HAP-1 (cell line): ENCODE measurements at regions of chr1 and their contacts with region 1.

Region 1: DNA sequence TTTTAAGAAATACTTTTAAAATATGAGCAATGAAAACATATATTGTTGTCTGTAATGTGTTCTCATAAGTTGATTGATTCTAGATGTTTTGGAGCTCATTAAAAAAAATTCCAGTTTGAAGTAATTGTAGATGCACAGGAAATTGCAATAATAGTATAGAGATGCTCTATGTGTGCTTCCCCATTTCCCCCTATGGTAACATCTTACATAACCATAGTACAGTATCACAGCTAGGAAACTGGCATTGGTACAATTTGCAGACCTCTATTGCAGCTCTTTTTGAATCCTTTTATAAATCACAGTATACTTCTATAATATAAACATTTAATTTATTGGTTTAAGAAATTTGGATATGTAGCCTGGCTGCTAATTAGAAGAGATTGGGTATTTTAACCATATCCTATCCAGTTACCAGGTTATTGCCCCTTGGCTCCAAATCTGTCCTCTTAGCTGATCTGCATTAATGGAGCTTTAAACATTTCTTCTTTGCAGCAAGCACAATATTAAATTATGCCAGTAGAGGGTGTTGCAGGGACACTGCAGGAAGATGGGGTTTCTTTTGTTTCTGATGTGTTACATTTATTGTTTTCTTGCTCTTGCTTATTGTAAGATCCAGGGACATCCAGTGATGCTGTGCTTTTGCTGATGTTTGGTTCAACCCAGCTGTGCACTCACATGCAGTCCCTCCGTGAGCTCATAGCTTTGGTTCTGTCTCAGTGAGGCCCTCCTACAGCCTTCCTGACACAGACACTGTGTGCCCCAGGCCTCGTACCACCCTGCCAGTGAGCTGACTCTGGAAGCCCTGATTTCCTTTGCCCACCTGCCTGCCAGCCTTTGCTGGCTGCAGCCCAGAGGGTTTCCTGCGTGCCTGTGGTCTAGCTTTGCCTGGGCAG is 103.3 kb downstream of the RABGAP1L start:
- DNase-seq: peak; percentile 16 to 75
- H3K4me3 ChIP-seq: no peak overlapping the region
- H3K4me1 ChIP-seq: peaks cover 7% of the 10 kb centered on the region
- H3K27me3 ChIP-seq: no peaks in the 10 kb centered on the region

Region 2: DNA sequence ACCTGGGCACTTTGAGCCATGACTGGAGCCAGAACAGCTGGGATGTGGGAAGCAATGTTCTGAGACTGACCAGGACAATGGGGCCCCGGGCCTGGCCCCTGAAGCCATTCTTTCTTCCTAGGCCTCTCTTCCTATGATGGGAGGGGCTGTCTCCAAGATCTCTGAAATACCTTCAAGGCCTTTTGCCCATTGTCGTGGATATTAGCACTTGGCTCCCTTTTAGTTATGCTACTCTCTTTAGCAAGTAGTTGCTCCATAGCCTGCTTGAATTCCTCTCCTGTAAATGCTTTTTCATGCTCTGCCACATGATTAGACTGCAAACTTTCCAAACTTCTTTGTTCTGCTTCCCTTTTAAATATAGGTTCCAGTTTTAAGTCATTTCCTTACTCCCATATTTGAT is 474.2 kb after region 1 on chr1:
- in situ Hi-C with region 1: loop called (anchors 10 kb)
- DNase-seq: no peak
- H3K4me3 ChIP-seq: no peak overlapping the region
- H3K4me1 ChIP-seq: no peaks in the 10 kb centered on the region
- H3K27me3 ChIP-seq: no peaks in the 10 kb centered on the region

Region 3: GRCh38 chr1:174999216-174999925 is 736.8 kb after region 1 on chr1:
- in situ Hi-C with region 1: loop called (anchors 25 kb)
- DNase-seq: peak; percentile 86 to 95
- H3K4me3 ChIP-seq: peak overlapping the region; percentile 79
- H3K4me1 ChIP-seq: peaks cover 24% of the 10 kb centered on the region
- H3K27me3 ChIP-seq: no peaks in the 10 kb centered on the region